ENCODE measurements at regions of chr12 and their contacts with region 1.

Region 1: GRCh38 chr12:112012775-112013600 is at the starts of genes ERP29 and TMEM116:
- DNase-seq: peak; percentile 99 to 100 (median 100)
- ATAC-seq: peak; percentile 82
- H3K4me3 ChIP-seq: peak within 1 kb of the TSS; percentile 94
- H3K4me3 Mint-ChIP-seq: peak within 1 kb of the TSS; percentile 88
- H3K27ac ChIP-seq: peak within 1 kb of the TSS; percentile 95
- H3K27ac Mint-ChIP-seq: peak within 1 kb of the TSS; percentile 99
- H3K4me1 ChIP-seq: peaks cover 43% of the 10 kb centered on the region
- H3K4me1 Mint-ChIP-seq: peaks cover 59% of the 10 kb centered on the region
- H3K27me3 ChIP-seq: no peaks in the 10 kb centered on the region
- H3K27me3 Mint-ChIP-seq: no peaks in the 10 kb centered on the region
- CTCF ChIP-seq: peak; percentile 66
- total RNA-seq, gene ERP29: 102 to 111 TPM
- total RNA-seq, gene TMEM116: 9.4 to 11.2 TPM

Region 2: DNA sequence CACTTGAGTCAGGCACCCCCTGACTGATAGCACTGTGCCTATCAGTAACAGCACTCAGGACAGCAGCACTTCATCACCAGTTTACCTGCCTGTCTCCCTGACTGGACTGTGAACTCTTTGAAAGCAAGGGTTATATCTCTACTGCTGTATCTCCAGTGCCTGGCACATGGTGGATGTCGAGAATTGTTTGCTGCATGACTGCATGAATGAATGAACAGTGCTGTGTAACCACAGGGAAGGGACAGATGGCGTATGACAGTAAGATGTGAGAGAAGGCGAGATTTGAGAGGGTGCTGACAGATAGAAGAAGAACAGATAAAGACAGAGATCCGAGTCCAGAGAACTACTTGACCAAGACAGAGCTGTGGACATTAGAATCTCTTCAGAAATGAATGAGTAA is 357.0 kb before region 1 on chr12:
- CTCF ChIA-PET with region 1: no interaction called
- POLR2A ChIA-PET with region 1: no interaction called
- intact Hi-C with region 1: no loop called
- DNase-seq: no peak
- ATAC-seq: no peak
- H3K4me3 ChIP-seq: no peak overlapping the region
- H3K4me3 Mint-ChIP-seq: no peak overlapping the region
- H3K27ac ChIP-seq: no peak overlapping the region
- H3K27ac Mint-ChIP-seq: no peak overlapping the region
- H3K4me1 ChIP-seq: no peaks in the 10 kb centered on the region
- H3K4me1 Mint-ChIP-seq: no peaks in the 10 kb centered on the region
- H3K27me3 ChIP-seq: no peaks in the 10 kb centered on the region
- H3K27me3 Mint-ChIP-seq: no peaks in the 10 kb centered on the region
- CTCF ChIP-seq: no peak

Region 3: GRCh38 chr12:111685744-111686517 is 327.1 kb before region 1 on chr12 and contains the starts of genes ACAD10 and BRAP:
- CTCF ChIA-PET with region 1: no interaction called
- POLR2A ChIA-PET with region 1: no interaction called
- intact Hi-C with region 1: loop called in 1 of 2 experiments (anchors 5 kb)
- DNase-seq: peak; percentile 89 to 97 (median 94)
- ATAC-seq: peak; percentile 92
- H3K4me3 ChIP-seq: peak within 1 kb of the TSS; percentile 77 to 95
- H3K4me3 Mint-ChIP-seq: peak within 1 kb of the TSS; percentile 95
- H3K27ac ChIP-seq: peak within 1 kb of the TSS; percentile 82 to 92
- H3K27ac Mint-ChIP-seq: peak within 1 kb of the TSS; percentile 95
- H3K4me1 ChIP-seq: peaks cover 27% of the 10 kb centered on the region
- H3K4me1 Mint-ChIP-seq: peaks cover 39% of the 10 kb centered on the region
- H3K27me3 ChIP-seq: no peaks in the 10 kb centered on the region
- H3K27me3 Mint-ChIP-seq: no peaks in the 10 kb centered on the region
- CTCF ChIP-seq: no peak
- total RNA-seq, gene ACAD10: 12.3 to 13.6 TPM
- total RNA-seq, gene BRAP: 29.3 to 30.4 TPM

Region 4: GRCh38 chr12:111942557-111942956 is 70.4 kb before region 1 on chr12:
- CTCF ChIA-PET with region 1: interaction called, 41 read pairs
- POLR2A ChIA-PET with region 1: interaction called, 8 read pairs
- intact Hi-C with region 1: loop called (anchors 1 kb)
- DNase-seq: no peak
- ATAC-seq: no peak
- H3K4me3 ChIP-seq: no peak overlapping the region
- H3K4me3 Mint-ChIP-seq: no peak overlapping the region
- H3K27ac ChIP-seq: no peak overlapping the region
- H3K27ac Mint-ChIP-seq: no peak overlapping the region
- H3K4me1 ChIP-seq: no peaks in the 10 kb centered on the region
- H3K4me1 Mint-ChIP-seq: peaks cover 13% of the 10 kb centered on the region
- H3K27me3 ChIP-seq: no peaks in the 10 kb centered on the region
- H3K27me3 Mint-ChIP-seq: no peaks in the 10 kb centered on the region
- CTCF ChIP-seq: no peak

Region 5: DNA sequence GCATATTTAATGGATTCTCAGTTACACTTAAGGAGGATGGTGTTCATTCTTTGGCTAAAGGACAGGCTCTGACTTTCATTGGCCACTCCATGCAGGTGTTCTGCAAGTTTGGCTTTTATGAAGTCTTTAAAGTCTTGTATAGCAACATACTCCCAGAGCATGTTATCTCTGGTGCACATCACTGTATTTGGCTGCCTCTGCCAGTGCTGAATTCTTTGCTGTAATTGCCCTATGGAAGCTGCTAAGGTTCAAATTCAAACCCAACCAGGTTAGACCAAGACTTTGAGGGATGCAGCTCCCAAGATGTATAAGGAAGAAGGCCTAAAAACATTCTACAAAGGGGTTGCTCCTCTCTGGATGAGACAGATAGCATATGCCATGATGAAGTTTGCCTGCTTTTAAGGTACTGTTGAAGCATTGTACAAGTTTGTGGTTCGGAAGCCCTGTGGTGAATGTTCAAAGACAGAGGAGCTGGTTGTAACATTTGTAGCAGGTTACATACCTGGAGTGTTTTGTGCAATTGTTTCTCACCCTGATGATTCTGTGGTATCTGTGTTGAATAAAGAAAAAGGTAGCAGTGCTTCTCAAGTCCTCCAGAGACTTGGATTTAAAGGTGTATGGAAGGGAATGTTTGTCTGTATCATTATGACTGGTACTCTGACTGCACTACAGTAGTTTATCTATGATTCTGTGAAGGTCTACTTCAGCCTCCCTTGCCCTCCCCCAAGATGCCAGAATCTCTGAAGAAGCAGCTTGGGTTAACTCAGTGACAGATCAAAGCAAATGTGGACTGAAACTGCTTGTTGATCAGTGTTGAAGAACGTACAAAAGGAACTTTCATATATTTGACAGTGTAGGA is 19.5 kb before region 1 on chr12:
- CTCF ChIA-PET with region 1: interaction called, 14 read pairs
- POLR2A ChIA-PET with region 1: interaction called, 73 read pairs
- intact Hi-C with region 1: loop called (anchors 1 kb)
- DNase-seq: peak in 6 of 9 experiments; percentile 29 to 73 (median 54)
- ATAC-seq: peak; percentile 80
- H3K4me3 ChIP-seq: peak overlapping the region; percentile 43 to 53
- H3K4me3 Mint-ChIP-seq: peak overlapping the region; percentile 84
- H3K27ac ChIP-seq: peak overlapping the region; percentile 36 to 74
- H3K27ac Mint-ChIP-seq: peak overlapping the region; percentile 91
- H3K4me1 ChIP-seq: peaks cover 70% of the 10 kb centered on the region
- H3K4me1 Mint-ChIP-seq: peaks cover 72% of the 10 kb centered on the region
- H3K27me3 ChIP-seq: no peaks in the 10 kb centered on the region
- H3K27me3 Mint-ChIP-seq: no peaks in the 10 kb centered on the region
- CTCF ChIP-seq: no peak

Region 6: DNA sequence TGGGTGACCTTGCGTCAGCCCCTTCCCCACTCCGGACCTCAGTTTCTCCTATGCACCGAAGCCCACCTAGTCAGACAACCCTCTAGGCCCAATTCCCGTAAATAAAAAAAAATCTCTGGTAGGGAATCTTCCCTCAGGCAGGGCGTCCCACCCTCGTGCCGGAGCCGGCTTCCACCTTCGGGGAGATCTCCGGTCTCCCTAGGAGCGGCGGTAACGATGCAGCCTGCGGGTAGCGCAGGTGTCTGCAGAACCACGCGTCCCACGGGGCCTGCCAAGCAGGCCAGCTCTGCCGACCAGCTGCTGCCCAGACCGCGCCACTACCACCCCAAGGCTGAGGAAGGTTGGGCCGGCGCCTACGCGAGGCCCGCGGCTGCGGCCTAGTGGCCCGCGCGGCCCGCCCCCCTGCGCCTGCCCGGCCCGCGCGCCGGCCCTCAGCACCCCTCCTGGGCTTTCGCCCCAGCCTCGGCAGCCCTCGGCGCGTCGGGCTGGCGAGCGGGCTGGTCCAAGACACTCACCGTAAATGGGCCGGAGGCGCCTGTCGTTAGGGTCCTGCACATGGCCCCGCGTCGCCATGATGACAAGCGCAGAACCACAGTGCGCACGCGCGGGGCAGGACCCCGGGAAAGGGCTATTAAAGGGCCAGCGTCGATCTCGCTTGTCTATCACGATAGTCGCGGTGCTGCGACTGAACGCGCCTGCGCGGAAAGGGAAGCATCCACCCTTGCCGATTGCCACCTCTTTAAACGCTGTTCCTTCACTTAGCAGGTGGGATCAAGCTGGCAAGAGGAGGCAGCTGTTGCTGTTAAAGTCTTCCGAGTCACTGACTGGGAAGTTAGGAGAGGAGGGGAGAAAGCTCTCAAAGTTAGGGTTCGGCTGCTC is 95.5 kb after region 1 on chr12 and contains the start of gene NAA25:
- CTCF ChIA-PET with region 1: interaction called, 3 read pairs
- POLR2A ChIA-PET with region 1: interaction called, 4 read pairs
- intact Hi-C with region 1: loop called (anchors 1 kb)
- DNase-seq: peak; percentile 66 to 92 (median 87)
- ATAC-seq: peak; percentile 80
- H3K4me3 ChIP-seq: peak within 1 kb of the TSS; percentile 91 to 100
- H3K4me3 Mint-ChIP-seq: peak within 1 kb of the TSS; percentile 97
- H3K27ac ChIP-seq: peak within 1 kb of the TSS; percentile 80 to 92
- H3K27ac Mint-ChIP-seq: peak within 1 kb of the TSS; percentile 96
- H3K4me1 ChIP-seq: peaks cover 35% of the 10 kb centered on the region
- H3K4me1 Mint-ChIP-seq: peaks cover 44% of the 10 kb centered on the region
- H3K27me3 ChIP-seq: no peaks in the 10 kb centered on the region
- H3K27me3 Mint-ChIP-seq: no peaks in the 10 kb centered on the region
- CTCF ChIP-seq: no peak
- total RNA-seq, gene NAA25: 35.1 to 35.3 TPM

Region 7: GRCh38 chr12:112125250-112125999 is 112.4 kb after region 1 on chr12 and contains the start of gene TRAFD1:
- CTCF ChIA-PET with region 1: interaction called, 3 read pairs
- POLR2A ChIA-PET with region 1: interaction called, 5 read pairs
- intact Hi-C with region 1: loop called in 1 of 2 experiments (anchors 5 kb)
- DNase-seq: peak; percentile 96 to 99 (median 98)
- ATAC-seq: peak; percentile 97
- H3K4me3 ChIP-seq: peak within 1 kb of the TSS; percentile 93 to 98
- H3K4me3 Mint-ChIP-seq: peak within 1 kb of the TSS; percentile 85
- H3K27ac ChIP-seq: peak within 1 kb of the TSS; percentile 82 to 89
- H3K27ac Mint-ChIP-seq: peak within 1 kb of the TSS; percentile 87
- H3K4me1 ChIP-seq: peaks cover 38% of the 10 kb centered on the region
- H3K4me1 Mint-ChIP-seq: peaks cover 40% of the 10 kb centered on the region
- H3K27me3 ChIP-seq: no peaks in the 10 kb centered on the region
- H3K27me3 Mint-ChIP-seq: no peaks in the 10 kb centered on the region
- CTCF ChIP-seq: no peak
- total RNA-seq, gene TRAFD1: 21.1 to 25.4 TPM

Region 8: DNA sequence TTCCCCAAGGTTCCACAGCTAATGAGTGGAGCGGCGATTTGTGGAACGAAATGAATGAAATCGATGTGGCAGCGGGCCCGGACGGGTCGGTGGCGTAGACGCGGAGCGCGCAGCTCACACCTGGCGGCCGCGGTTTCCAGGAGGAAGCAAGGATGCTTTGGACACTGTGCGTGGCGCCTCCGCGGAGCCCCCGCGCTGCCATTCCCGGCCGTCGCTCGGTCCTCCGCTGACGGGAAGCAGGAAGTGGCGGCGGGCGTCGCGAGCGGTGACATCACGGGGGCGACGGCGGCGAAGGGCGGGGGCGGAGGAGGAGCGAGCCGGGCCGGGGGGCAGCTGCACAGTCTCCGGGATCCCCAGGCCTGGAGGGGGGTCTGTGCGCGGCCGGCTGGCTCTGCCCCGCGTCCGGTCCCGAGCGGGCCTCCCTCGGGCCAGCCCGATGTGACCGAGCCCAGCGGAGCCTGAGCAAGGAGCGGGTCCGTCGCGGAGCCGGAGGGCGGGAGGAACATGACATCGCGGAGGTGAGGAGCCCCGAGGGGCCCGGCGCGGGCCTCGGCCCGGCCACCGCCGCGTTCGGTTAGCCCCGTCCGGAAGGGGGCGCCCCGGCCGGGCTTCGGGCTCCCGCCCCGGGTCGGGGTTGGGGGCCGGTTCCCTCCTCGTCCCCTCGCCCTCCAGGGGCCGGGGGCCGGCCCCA is 405.8 kb after region 1 on chr12 and contains the start of gene PTPN11:
- CTCF ChIA-PET with region 1: no interaction called
- POLR2A ChIA-PET with region 1: no interaction called
- intact Hi-C with region 1: loop called in 1 of 2 experiments (anchors 10 kb)
- DNase-seq: peak; percentile 81 to 96 (median 89)
- ATAC-seq: peak; percentile 89
- H3K4me3 ChIP-seq: peak within 1 kb of the TSS; percentile 75 to 98
- H3K4me3 Mint-ChIP-seq: peak within 1 kb of the TSS; percentile 94
- H3K27ac ChIP-seq: peak within 1 kb of the TSS; percentile 89 to 97
- H3K27ac Mint-ChIP-seq: peak within 1 kb of the TSS; percentile 95
- H3K4me1 ChIP-seq: peaks cover 21% of the 10 kb centered on the region
- H3K4me1 Mint-ChIP-seq: peaks cover 40% of the 10 kb centered on the region
- H3K27me3 ChIP-seq: no peaks in the 10 kb centered on the region
- H3K27me3 Mint-ChIP-seq: no peaks in the 10 kb centered on the region
- CTCF ChIP-seq: no peak
- total RNA-seq, gene PTPN11: 56.0 to 57.9 TPM